Panc1 (cell line): ENCODE measurements at regions of chr10 and their contacts with region 1.

Region 1: DNA sequence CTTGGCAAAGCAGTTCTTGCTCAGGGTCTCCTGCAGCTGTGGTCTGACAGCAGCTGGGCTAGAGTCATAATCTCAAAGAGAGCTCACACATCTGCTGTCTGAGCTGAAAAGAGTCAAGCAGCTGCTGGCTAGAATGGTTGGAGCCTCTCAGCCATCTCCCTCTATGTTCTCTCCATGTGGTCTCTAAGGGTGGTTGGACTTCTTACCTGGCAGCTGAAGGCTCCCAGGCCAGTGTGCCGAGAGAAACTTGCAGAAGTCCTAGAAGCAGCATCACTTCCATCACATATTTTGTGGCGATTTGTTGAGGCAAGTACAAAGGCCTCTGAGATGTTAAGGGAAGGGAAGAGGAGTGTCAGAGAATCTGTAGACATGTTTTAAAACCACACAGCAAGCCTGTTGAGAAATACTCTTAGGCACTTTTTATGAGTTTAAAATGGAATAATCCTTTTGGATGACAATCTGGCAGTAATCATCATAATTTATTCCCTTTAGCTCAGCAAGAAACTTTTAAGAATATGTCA is 93.2 kb downstream of the REEP3 start:
- DNase-seq: no peak
- ATAC-seq: peak; percentile 48; the same call in 1 of the 2 replicates
- H3K4me3 ChIP-seq: no peak overlapping the region
- H3K27ac ChIP-seq: no peak overlapping the region
- H3K4me1 ChIP-seq: no peaks in the 10 kb centered on the region
- H3K27me3 ChIP-seq: no peaks in the 10 kb centered on the region
- CTCF ChIP-seq: no peak

Region 2: DNA sequence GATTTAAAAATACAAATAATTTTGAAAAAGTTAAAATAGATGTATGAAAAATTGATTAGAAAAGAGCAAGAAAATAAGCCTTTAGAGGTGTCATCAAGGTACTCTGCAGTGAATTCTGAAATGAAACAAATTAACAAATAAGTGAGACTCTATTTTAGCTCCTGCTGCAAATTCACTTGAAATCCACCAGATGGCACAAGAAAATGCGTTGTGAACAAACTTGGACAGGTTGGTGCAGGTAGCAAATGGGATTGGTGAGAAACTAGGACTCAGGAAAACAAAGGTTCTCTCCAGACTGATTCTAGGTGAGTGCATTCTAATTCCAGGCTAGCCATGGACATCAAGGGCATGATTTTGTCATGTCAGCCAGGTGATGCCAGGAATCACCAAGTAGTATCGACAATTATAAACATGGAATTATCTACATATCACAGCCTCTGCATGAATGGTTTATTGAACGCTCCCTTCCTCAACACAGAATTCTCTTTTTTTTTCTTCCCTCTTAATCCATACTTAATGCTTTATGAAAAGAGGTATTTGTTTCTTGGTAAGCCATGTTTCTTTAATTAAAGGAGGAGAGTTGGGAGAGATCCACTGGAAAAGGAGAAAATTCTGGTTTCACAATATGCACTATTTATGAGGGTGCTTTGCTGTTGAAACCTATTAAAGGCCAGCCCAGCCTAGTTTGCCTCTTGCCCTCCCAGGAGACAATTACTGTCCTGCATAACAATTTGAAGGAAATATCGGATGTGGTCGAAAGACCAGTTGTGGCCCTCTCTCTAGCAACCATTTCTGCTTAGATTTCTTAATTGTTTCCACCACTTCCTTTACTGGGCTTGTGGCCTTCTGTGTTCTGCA is 1122.2 kb before region 1 on chr10:
- CTCF ChIA-PET with region 1: no interaction called
- POLR2A ChIA-PET with region 1: interaction called, 17 read pairs
- in situ Hi-C with region 1: no loop called
- intact Hi-C with region 1: no loop called
- DNase-seq: peak; percentile 18
- ATAC-seq: peak; percentile 76; the same call in 1 of the 2 replicates
- H3K4me3 ChIP-seq: no peak overlapping the region
- H3K27ac ChIP-seq: no peak overlapping the region
- H3K4me1 ChIP-seq: no peaks in the 10 kb centered on the region
- H3K27me3 ChIP-seq: 0 out of 2 replicates have a peak, but pooled peaks cover 2% of the 10 kb centered on the region
- CTCF ChIP-seq: peak; percentile 76

Region 3: DNA sequence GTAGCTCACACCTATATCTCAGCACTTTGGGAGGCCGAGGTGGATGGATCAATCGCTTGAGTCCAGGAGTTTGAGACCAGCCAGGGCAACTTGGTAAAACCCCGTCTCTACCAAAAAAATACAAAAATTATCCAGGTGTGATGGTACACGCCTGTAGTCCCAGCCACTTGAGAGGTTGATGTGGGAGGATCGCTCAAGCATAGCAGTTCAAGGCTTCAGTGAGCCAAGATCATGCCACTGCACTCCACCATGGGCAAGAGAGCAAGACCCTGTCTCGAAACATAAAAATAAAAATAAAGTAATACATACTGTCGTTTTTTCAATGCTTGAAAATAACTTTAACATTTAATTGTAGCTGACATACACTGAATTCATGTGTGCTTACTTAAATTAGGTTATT is 35.9 kb before region 1 on chr10:
- CTCF ChIA-PET with region 1: no interaction called
- POLR2A ChIA-PET with region 1: interaction called, 14 read pairs
- in situ Hi-C with region 1: no loop called
- intact Hi-C with region 1: no loop called
- DNase-seq: no peak
- ATAC-seq: no peak
- H3K4me3 ChIP-seq: no peak overlapping the region
- H3K27ac ChIP-seq: no peak overlapping the region
- H3K4me1 ChIP-seq: peaks cover 6% of the 10 kb centered on the region
- H3K27me3 ChIP-seq: no peaks in the 10 kb centered on the region
- CTCF ChIP-seq: no peak

Region 4: GRCh38 chr10:63651864-63652263 is 37.4 kb after region 1 on chr10:
- CTCF ChIA-PET with region 1: no interaction called
- POLR2A ChIA-PET with region 1: interaction called, 10 read pairs
- in situ Hi-C with region 1: no loop called
- intact Hi-C with region 1: no loop called
- DNase-seq: no peak
- ATAC-seq: no peak
- H3K4me3 ChIP-seq: no peak overlapping the region
- H3K27ac ChIP-seq: no peak overlapping the region
- H3K4me1 ChIP-seq: no peaks in the 10 kb centered on the region
- H3K27me3 ChIP-seq: no peaks in the 10 kb centered on the region
- CTCF ChIP-seq: no peak

Region 5: DNA sequence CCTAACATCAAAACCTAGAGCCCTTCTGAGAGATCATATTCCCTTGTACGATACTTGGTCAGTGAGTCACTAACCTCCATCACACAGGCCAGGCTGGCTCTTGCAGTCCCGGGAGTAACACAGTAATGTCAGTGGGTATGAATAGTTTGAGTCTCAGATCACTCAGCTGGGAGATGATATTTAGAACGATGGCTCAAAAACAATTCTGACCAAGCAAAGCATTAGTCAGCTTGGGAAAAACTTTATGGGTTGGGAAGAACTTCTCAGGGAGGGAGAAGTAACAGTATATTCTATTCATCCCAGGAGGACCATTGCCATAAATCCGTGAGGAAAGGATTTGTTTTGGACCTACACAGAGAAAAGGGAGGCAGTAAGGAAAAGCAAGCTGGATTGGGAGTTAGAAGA is 85.8 kb after region 1 on chr10:
- CTCF ChIA-PET with region 1: no interaction called
- POLR2A ChIA-PET with region 1: no interaction called
- in situ Hi-C with region 1: no loop called
- intact Hi-C with region 1: no loop called
- DNase-seq: peak; percentile 87
- ATAC-seq: peak; percentile 97
- H3K4me3 ChIP-seq: no peak overlapping the region
- H3K27ac ChIP-seq: peak overlapping the region; percentile 84
- H3K4me1 ChIP-seq: peaks cover 49% of the 10 kb centered on the region
- H3K27me3 ChIP-seq: no peaks in the 10 kb centered on the region
- CTCF ChIP-seq: no peak